A673 (cell line): ENCODE measurements at regions of chr5 and their contacts with region 1.

Region 1: GRCh38 chr5:24642022-24642421 is 2.8 kb downstream of the CDH10 start:
- DNase-seq: peak; percentile 74
- H3K4me3 ChIP-seq: no peak overlapping the region
- H3K27ac ChIP-seq: no peak overlapping the region
- H3K4me1 ChIP-seq: peaks cover 16% of the 10 kb centered on the region
- H3K27me3 ChIP-seq: no peaks in the 10 kb centered on the region
- CTCF ChIP-seq: peak; percentile 70

Region 2: DNA sequence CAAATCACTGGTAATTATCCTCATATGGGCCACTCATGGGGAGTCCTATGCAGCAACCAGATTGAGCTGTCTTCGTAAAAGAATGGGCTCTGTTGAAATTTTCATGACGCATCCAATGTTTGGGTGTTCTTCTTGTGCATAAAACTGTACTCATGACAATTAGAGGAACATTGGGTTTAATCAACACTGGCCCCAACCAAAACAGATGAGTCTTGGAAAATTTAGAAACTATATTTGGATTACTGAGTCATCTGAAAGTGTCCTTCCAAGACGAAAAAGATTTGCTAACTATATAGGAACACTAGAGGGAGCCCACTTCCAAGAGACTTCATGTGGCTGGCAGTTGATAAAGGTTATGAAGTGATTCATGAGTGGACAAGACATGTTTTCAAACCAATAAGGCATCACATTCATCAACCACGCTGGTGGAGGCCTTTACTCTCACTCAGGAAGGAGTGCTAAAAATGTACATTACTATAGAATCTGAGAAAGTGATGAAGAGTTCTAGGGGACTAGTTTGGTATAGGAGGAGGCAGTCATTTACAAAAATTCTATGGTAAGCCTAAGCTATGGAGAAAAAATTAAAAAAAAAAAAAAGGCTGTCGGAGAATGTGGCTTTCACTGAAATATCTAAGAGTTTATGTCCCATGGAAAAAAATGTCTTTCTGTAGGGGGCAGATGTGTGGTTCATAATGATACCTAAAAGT is 821.1 kb before region 1 on chr5:
- CTCF ChIA-PET with region 1: no interaction called
- POLR2A ChIA-PET with region 1: no interaction called
- intact Hi-C with region 1: loop called (anchors 10 kb)
- DNase-seq: peak; percentile 69
- H3K4me3 ChIP-seq: no peak overlapping the region
- H3K27ac ChIP-seq: no peak overlapping the region
- H3K4me1 ChIP-seq: no peaks in the 10 kb centered on the region
- H3K27me3 ChIP-seq: no peaks in the 10 kb centered on the region
- CTCF ChIP-seq: peak; percentile 74

Region 3: GRCh38 chr5:24232929-24233498 is 409.0 kb before region 1 on chr5:
- CTCF ChIA-PET with region 1: no interaction called
- POLR2A ChIA-PET with region 1: no interaction called
- intact Hi-C with region 1: loop called (anchors 1 kb)
- DNase-seq: peak; percentile 46
- H3K4me3 ChIP-seq: no peak overlapping the region
- H3K27ac ChIP-seq: no peak overlapping the region
- H3K4me1 ChIP-seq: peaks cover 6% of the 10 kb centered on the region
- H3K27me3 ChIP-seq: no peaks in the 10 kb centered on the region
- CTCF ChIP-seq: peak; percentile 67

Region 4: GRCh38 chr5:24444414-24444813 is 197.6 kb before region 1 on chr5:
- CTCF ChIA-PET with region 1: interaction called, 4 read pairs
- POLR2A ChIA-PET with region 1: no interaction called
- intact Hi-C with region 1: loop called (anchors 1 kb)
- DNase-seq: no peak
- H3K4me3 ChIP-seq: no peak overlapping the region
- H3K27ac ChIP-seq: no peak overlapping the region
- H3K4me1 ChIP-seq: no peaks in the 10 kb centered on the region
- H3K27me3 ChIP-seq: no peaks in the 10 kb centered on the region
- CTCF ChIP-seq: no peak

Region 5: GRCh38 chr5:24539613-24540012 is 102.4 kb before region 1 on chr5:
- CTCF ChIA-PET with region 1: no interaction called
- POLR2A ChIA-PET with region 1: no interaction called
- intact Hi-C with region 1: loop called (anchors 5 kb)
- DNase-seq: peak; percentile 89
- H3K4me3 ChIP-seq: no peak overlapping the region
- H3K27ac ChIP-seq: peak overlapping the region; percentile 62
- H3K4me1 ChIP-seq: peaks cover 38% of the 10 kb centered on the region
- H3K27me3 ChIP-seq: no peaks in the 10 kb centered on the region
- CTCF ChIP-seq: no peak

Region 6: DNA sequence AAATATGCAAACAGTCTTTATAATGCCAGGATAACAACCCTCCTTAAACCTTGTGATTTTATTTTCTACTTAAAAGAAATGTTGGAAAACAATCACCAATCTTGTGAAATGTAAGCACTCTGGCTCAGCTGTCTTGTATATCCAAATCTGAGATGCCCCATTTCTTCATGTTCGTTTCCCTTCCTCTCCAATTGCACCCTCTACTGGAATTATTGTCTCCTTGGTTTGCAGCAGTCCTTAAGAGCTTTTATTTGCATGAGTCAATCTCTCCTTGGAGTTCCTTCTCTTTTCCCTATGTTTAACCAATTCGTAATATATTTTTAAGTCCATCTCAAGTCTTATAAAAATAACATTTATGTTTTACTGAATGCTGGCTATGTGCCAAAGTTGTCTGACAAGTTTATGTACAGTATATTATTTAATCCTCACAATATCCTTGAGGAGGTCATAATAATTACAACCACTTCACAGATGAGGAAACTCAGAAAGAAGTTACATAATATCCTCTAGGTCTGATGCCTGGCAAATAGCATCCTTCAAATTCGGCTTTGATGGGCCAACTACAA is 364.8 kb after region 1 on chr5:
- CTCF ChIA-PET with region 1: no interaction called
- POLR2A ChIA-PET with region 1: no interaction called
- intact Hi-C with region 1: loop called (anchors 5 kb)
- DNase-seq: peak; percentile 69
- H3K4me3 ChIP-seq: no peak overlapping the region
- H3K27ac ChIP-seq: no peak overlapping the region
- H3K4me1 ChIP-seq: no peaks in the 10 kb centered on the region
- H3K27me3 ChIP-seq: no peaks in the 10 kb centered on the region
- CTCF ChIP-seq: peak; percentile 58